ENCODE measurements at regions of chr7 and their contacts with region 1.

Region 1: GRCh38 chr7:132225216-132226030 is 350.8 kb downstream of the PLXNA4 start:
- DNase-seq: no peak
- H3K4me3 ChIP-seq: no peak overlapping the region
- H3K27ac ChIP-seq: no peak overlapping the region
- H3K4me1 ChIP-seq: no peaks in the 10 kb centered on the region
- H3K27me3 ChIP-seq: no peaks in the 10 kb centered on the region
- CTCF ChIP-seq: no peak
- EP300 ChIP-seq: no peak
- POLR2A ChIP-seq: no peak

Region 2: DNA sequence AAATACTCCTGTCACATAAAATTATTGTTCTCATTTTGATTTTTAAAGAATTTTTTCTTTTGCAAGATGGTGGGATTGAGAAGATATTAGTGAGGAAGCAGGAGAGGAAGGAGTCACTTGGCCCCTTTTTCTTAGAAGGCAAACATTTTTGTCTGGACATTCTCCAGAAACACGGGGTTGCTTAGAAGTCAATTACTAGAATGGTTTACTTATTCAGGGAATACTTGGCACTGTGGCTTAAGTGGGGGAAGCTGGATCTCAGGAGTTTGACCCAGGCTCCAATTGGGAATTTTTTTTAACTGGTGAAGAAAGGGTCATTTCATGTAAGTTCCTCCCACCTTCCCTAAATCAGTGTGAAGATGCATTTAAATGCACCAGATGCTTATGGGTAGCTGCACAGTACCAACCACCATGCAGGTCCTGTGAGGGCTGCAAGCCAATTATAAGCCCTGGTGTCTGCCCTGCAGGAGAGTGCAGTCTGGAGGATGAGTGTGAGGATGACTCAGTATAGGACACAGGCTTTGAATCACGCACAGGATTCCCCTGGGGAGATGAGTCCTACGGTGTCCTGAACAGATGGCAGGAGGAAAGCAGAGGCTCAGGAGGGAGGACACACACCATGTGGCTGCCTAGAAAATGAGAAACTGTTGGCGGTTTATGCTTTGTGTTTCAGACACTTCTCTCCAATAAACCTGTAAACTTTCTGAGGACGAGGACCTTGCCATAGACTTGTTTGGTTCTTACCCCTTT is 51.7 kb after region 1 on chr7:
- intact Hi-C with region 1: loop called in 1 of 4 experiments (anchors 5 kb)
- DNase-seq: no peak
- H3K4me3 ChIP-seq: no peak overlapping the region
- H3K27ac ChIP-seq: no peak overlapping the region
- H3K4me1 ChIP-seq: peaks cover 6% of the 10 kb centered on the region
- H3K27me3 ChIP-seq: no peaks in the 10 kb centered on the region
- CTCF ChIP-seq: no peak
- EP300 ChIP-seq: no peak
- POLR2A ChIP-seq: no peak